Endothelial cell of umbilical vein (primary cell): ENCODE measurements at regions of chr1 and their contacts with region 1.

Region 1: DNA sequence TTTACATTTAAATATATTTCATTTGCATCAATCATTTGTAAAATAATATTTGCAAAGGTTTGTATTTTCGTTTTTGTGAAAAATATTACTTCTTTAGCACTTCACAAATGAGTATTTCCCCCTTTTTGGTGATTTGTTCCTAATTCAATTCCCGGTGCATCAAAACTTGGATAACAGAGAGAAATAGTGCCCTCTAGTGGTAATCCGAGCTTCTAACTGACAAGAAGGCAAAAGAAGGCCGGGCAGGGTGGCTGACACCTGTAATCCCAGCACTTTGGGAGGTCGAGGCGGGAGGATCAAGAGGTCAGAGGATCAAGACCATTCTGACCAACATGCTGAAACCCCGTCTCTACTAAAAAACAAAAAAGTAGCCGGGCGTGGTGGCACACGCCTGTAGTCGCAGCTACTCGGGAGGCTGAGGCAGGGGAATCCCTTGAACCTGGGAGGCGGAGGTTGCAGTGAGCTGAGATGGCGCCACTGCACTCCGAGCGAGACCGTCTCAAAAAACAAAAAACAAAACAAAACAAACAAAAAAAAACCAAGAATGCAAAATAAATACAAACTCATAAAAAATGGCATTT is 137.7 kb downstream of the COL11A1 start:
- DNase-seq: peak; percentile 42
- H3K4me3 ChIP-seq: no peak overlapping the region
- H3K27ac ChIP-seq: no peak overlapping the region
- H3K4me1 ChIP-seq: no peaks in the 10 kb centered on the region
- H3K27me3 ChIP-seq: no peaks in the 10 kb centered on the region
- CTCF ChIP-seq: peak; percentile 57 to 61
- POLR2A ChIP-seq: no peak

Region 2: DNA sequence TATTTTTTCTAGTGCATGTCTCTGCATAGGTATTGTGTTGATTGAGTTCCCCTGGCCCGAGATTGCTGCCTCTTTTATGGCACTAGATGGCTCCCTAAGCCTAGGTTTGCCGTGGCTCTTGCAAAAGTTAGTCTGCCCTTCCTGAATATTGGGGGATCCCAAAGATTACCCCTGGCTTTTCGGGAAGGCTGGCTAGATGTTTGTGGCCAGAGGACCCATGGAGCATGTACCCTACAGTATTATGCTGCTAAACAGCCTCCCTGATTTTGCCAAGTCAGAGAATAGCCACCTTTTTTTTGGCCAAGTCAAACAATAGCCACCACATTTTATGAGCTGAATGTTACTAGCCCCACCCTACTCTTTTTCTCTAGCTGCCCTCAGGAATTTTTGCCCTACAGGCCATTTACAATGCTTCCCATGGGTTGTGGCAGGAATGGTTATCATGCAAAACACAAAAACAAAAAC is 1317.1 kb before region 1 on chr1:
- CTCF ChIA-PET with region 1: interaction called, 36 read pairs
- POLR2A ChIA-PET with region 1: no interaction called
- dilution Hi-C with region 1: no loop called
- intact Hi-C with region 1: loop called (anchors 5 kb)
- DNase-seq: peak; percentile 39
- H3K4me3 ChIP-seq: no peak overlapping the region
- H3K27ac ChIP-seq: no peak overlapping the region
- H3K4me1 ChIP-seq: no peaks in the 10 kb centered on the region
- H3K27me3 ChIP-seq: peaks cover 2 to 8% of the 10 kb centered on the region in 2 experiments
- CTCF ChIP-seq: peak; percentile 48 to 54
- POLR2A ChIP-seq: no peak

Region 3: DNA sequence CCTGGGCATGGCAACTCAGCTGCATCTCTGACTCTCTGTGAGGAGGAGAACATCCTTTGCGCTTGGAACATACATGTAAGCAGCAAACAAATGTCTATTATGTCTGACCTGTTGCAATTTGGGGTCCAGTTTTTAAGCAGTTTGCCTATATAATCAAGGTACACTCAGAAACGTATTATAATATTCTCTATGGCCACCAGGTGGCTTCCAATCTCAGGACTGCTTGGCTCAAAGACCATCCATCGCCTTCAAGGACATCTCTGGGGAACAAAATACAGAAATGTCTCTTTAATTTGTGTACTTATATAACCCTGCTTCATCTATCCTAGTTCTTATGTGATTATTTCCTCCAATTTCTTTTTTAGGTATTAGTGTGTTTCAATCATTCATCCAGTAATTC is 1201.1 kb before region 1 on chr1:
- CTCF ChIA-PET with region 1: interaction called, 28 read pairs
- POLR2A ChIA-PET with region 1: no interaction called
- dilution Hi-C with region 1: no loop called
- intact Hi-C with region 1: loop called (anchors 5 kb)
- DNase-seq: peak; percentile 32
- H3K4me3 ChIP-seq: no peak overlapping the region
- H3K27ac ChIP-seq: no peak overlapping the region
- H3K4me1 ChIP-seq: no peaks in the 10 kb centered on the region
- H3K27me3 ChIP-seq: peaks cover 0 to 3% of the 10 kb centered on the region in 2 experiments
- CTCF ChIP-seq: peak; percentile 27 to 40
- POLR2A ChIP-seq: no peak

Region 4: GRCh38 chr1:101993710-101994109 is 976.9 kb before region 1 on chr1:
- CTCF ChIA-PET with region 1: interaction called, 12 read pairs
- POLR2A ChIA-PET with region 1: no interaction called
- dilution Hi-C with region 1: no loop called
- intact Hi-C with region 1: no loop called
- DNase-seq: no peak
- H3K4me3 ChIP-seq: no peak overlapping the region
- H3K27ac ChIP-seq: no peak overlapping the region
- H3K4me1 ChIP-seq: no peaks in the 10 kb centered on the region
- H3K27me3 ChIP-seq: peaks cover 2 to 8% of the 10 kb centered on the region in 2 experiments
- CTCF ChIP-seq: no peak
- POLR2A ChIP-seq: no peak

Region 5: DNA sequence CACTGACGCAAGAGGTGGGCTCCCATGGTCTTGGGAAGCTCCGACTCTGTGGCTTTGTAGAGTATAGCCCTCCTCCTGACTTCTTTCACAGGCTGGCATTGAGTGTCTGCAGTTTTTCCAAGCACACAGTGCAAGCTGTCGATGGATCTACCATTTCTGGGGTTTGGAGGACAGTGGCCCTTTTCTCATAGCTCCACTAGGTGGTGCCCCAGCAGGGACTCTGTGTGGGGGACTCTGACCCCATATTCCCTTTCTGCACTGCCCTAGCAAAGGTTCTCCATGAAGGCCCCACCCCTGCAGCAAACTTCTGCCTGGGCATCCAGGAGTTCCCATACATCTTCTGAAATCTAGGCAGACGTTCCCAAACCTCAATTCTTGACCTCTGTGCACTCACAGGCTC is 98.5 kb before region 1 on chr1:
- CTCF ChIA-PET with region 1: interaction called, 12 read pairs
- POLR2A ChIA-PET with region 1: no interaction called
- dilution Hi-C with region 1: no loop called
- intact Hi-C with region 1: no loop called
- DNase-seq: no peak
- H3K4me3 ChIP-seq: no peak overlapping the region
- H3K27ac ChIP-seq: no peak overlapping the region
- H3K4me1 ChIP-seq: no peaks in the 10 kb centered on the region
- H3K27me3 ChIP-seq: no peaks in the 10 kb centered on the region
- CTCF ChIP-seq: no peak
- POLR2A ChIP-seq: no peak

Region 6: GRCh38 chr1:102879439-102879993 is 91.1 kb before region 1 on chr1:
- CTCF ChIA-PET with region 1: interaction called, 12 read pairs
- POLR2A ChIA-PET with region 1: no interaction called
- dilution Hi-C with region 1: no loop called
- intact Hi-C with region 1: no loop called
- DNase-seq: peak; percentile 43
- H3K4me3 ChIP-seq: no peak overlapping the region
- H3K27ac ChIP-seq: no peak overlapping the region
- H3K4me1 ChIP-seq: peaks cover 24% of the 10 kb centered on the region
- H3K27me3 ChIP-seq: no peaks in the 10 kb centered on the region
- CTCF ChIP-seq: no peak
- POLR2A ChIP-seq: no peak

Region 7: DNA sequence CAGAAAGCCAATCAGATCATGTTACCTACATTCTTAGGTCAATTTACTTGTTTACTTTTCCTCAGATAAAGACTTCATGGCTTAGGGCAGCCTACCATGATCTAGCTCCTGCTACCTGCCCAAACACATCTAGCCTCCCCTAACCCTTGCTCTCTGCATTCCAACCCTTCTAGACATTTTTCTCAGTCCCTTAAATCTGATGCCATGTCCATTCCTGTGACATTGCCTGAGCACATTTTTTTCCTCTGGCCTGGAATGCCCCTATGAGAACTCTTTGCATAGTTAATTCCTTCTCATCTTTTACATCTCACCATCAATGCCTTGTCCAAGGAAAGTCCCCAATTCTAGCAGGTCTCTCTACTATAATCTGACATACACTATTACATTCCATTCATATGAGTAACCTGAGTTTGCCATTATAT is 29.2 kb before region 1 on chr1:
- CTCF ChIA-PET with region 1: interaction called, 13 read pairs
- POLR2A ChIA-PET with region 1: no interaction called
- dilution Hi-C with region 1: no loop called
- intact Hi-C with region 1: no loop called
- DNase-seq: no peak
- H3K4me3 ChIP-seq: no peak overlapping the region
- H3K27ac ChIP-seq: no peak overlapping the region
- H3K4me1 ChIP-seq: no peaks in the 10 kb centered on the region
- H3K27me3 ChIP-seq: no peaks in the 10 kb centered on the region
- CTCF ChIP-seq: no peak
- POLR2A ChIP-seq: no peak